ENCODE measurements at regions of chrX and their contacts with region 1.

Region 1: DNA sequence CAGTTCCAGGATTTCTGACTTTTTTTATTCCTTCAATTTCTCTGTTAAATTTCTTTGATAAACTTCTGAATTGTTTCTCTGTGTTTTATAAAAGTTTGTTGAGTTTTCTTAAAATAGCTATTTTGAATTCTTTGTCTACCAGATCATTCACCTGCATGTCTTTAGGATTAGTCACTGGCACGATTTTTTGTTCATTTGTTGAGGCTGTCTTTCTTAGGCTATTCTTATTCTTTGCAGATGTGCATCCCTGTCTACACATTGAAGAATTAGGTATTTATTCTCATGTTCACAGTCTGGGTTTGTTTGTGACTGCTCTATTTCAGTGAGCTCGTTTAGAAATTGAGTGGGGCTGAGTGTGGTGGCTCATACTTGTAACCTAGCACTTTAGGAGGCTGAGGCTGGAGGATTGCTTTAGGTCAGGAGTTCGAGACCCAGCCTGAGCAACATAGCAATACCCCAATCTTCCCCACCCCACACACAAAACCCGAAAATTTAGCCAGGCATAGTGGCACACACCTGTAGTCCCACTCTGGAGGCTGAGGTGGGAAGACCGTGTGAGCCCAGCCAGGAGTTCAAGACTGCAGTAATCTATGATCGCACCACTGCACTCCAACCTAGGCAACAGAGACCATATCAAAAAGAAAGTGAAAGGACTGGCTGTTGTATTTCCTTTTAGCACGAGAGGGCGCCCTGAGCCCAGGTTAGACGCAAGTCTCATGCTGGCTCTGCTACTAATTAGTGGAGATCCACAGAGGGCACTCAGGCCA is 42.0 kb downstream of the F8 start:
- DNase-seq: peak; percentile 85
- ATAC-seq: peak; percentile 100
- H3K4me3 Mint-ChIP-seq: peak overlapping the region; percentile 67
- H3K27ac Mint-ChIP-seq: peak overlapping the region; percentile 77
- H3K4me1 Mint-ChIP-seq: peaks cover 4% of the 10 kb centered on the region
- H3K27me3 Mint-ChIP-seq: no peaks in the 10 kb centered on the region

Region 2: DNA sequence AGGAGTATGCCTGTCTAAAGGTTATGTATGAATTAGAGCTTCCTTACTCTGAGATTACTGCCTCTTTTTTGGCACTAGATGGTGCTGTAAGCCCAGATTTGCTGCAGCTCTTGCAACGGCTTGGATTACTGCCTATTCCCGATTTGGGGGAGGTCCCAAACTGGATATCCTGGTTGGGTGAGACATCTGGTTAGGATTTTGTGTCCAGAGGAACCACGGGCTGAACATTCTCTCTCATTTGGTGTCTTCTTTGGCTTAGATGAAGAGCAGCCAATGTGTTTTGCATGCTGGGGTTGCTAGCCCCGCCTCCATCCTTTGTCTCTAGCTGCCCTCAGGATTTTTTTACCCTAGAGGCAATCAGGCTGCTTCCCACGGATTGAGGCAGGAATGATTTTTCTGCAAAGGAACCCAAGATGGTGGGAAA is 62.4 kb before region 1 on chrX:
- CTCF ChIA-PET with region 1: interaction called, 7 read pairs
- POLR2A ChIA-PET with region 1: no interaction called
- intact Hi-C with region 1: loop called in 1 of 2 experiments (anchors 5 kb)
- DNase-seq: peak; percentile 46
- ATAC-seq: peak; percentile 57
- H3K4me3 Mint-ChIP-seq: peak overlapping the region; percentile 44
- H3K27ac Mint-ChIP-seq: no peak overlapping the region
- H3K4me1 Mint-ChIP-seq: no peaks in the 10 kb centered on the region
- H3K27me3 Mint-ChIP-seq: peaks cover 3% of the 10 kb centered on the region

Region 3: GRCh38 chrX:155056877-155057792 is 76.6 kb after region 1 on chrX:
- CTCF ChIA-PET with region 1: interaction called, 15 read pairs
- POLR2A ChIA-PET with region 1: interaction called, 6 read pairs
- intact Hi-C with region 1: loop called (anchors 1 kb)
- DNase-seq: peak; percentile 63
- ATAC-seq: peak; percentile 82
- H3K4me3 Mint-ChIP-seq: peak overlapping the region; percentile 21
- H3K27ac Mint-ChIP-seq: peak overlapping the region; percentile 25
- H3K4me1 Mint-ChIP-seq: peaks cover 33% of the 10 kb centered on the region
- H3K27me3 Mint-ChIP-seq: no peaks in the 10 kb centered on the region

Region 4: GRCh38 chrX:155086202-155086840 is 105.8 kb after region 1 on chrX:
- CTCF ChIA-PET with region 1: interaction called, 3 read pairs
- POLR2A ChIA-PET with region 1: no interaction called
- intact Hi-C with region 1: loop called in 1 of 2 experiments (anchors 1 kb)
- DNase-seq: peak; percentile 63
- ATAC-seq: no peak
- H3K4me3 Mint-ChIP-seq: no peak overlapping the region
- H3K27ac Mint-ChIP-seq: no peak overlapping the region
- H3K4me1 Mint-ChIP-seq: peaks cover 2% of the 10 kb centered on the region
- H3K27me3 Mint-ChIP-seq: no peaks in the 10 kb centered on the region

Region 5: GRCh38 chrX:155819966-155820491 is 839.5 kb after region 1 on chrX:
- CTCF ChIA-PET with region 1: no interaction called
- POLR2A ChIA-PET with region 1: no interaction called
- intact Hi-C with region 1: loop called in 1 of 2 experiments (anchors 10 kb)
- DNase-seq: peak; percentile 66
- ATAC-seq: peak; percentile 66
- H3K4me3 Mint-ChIP-seq: no peak overlapping the region
- H3K27ac Mint-ChIP-seq: no peak overlapping the region
- H3K4me1 Mint-ChIP-seq: no peaks in the 10 kb centered on the region
- H3K27me3 Mint-ChIP-seq: peaks cover 7% of the 10 kb centered on the region